Aorta (tissue), 5 donors: ENCODE measurements at regions of chr6 and their contacts with region 1.

Region 1: DNA sequence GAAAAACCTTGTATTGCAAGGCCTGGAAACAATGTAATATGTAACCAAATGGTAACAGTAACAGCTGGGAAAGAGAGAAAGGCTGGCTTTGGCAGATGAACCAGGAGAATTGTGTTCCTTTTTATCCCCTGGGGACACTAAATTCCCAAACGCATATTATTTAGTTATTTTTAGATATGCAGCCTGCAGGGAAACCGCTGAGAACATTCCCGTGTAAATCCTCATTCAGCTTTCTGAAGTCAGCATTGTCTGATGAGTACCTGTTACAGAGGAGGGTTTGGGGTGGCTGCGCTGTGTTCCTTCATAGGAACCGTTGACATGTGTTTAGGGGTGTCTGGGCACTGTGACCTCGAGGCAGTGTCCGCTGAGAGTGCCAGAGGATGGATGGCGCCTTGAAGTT is 101.3 kb downstream of the SMOC2 start:
- DNase-seq: no peak
- ATAC-seq: peak; percentile 31
- H3K4me3 ChIP-seq: no peak overlapping the region
- H3K27ac ChIP-seq: peak overlapping the region; percentile 50 to 93
- H3K4me1 ChIP-seq: peaks cover 0 to 4% of the 10 kb centered on the region in 2 donors
- H3K27me3 ChIP-seq: no peaks in the 10 kb centered on the region

Region 2: GRCh38 chr6:168574699-168575195 is 32.4 kb after region 1 on chr6:
- intact Hi-C with region 1: loop called in 1 of 2 experiments (anchors 2 kb)
- DNase-seq: peak; percentile 86 to 90
- ATAC-seq: peak; percentile 86
- H3K4me3 ChIP-seq: no peak overlapping the region
- H3K27ac ChIP-seq: peak overlapping the region; percentile 63 to 95
- H3K4me1 ChIP-seq: peaks cover 0 to 13% of the 10 kb centered on the region in 2 donors
- H3K27me3 ChIP-seq: no peaks in the 10 kb centered on the region